Sciatic nerve (tissue), 2 donors: ENCODE measurements at regions of chr1 and their contacts with region 1.

Region 1: DNA sequence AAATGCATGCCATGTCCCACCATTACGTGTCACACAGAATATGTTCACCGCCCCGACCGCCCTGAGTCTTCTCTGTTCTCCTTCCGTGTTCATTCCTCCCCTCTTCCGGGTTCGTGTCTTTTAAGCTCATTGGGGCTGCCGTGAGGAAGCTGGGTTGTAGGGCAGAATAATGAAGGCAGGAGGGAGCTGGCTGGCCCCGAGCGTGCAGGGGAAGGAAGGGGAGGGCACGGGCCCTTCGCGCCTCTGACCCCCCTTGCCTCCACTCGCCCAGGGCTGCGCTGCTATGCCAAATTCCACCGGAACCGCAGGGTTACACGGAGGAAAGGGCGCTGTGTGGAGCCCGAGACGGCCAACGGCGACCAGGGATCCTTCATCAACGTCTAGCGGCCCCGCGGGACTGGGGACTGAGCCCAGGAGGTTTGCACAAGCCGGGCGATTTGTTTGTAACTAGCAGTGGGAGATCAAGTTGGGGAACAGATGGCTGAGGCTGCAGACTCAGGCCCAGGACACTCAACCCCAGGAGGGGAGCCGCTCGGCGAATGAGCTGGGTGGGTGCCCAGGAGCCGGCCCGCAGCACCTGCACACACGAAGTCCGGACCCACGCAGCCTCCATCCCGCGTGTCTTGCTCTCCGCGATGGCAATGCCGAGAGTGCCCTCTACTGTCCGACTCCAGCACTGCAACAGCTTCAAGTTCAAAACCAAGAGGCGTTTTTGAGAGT is 16.5 kb upstream of the AGTRAP start:
- DNase-seq: peak; percentile 92
- ATAC-seq: peak; percentile 86

Region 2: GRCh38 chr1:11650331-11650991 is 69.0 kb before region 1 on chr1:
- intact Hi-C with region 1: loop called (anchors 5 kb)
- DNase-seq: peak; percentile 83
- ATAC-seq: peak; percentile 40